ENCODE measurements at regions of chrX and their contacts with region 1.

Region 1: DNA sequence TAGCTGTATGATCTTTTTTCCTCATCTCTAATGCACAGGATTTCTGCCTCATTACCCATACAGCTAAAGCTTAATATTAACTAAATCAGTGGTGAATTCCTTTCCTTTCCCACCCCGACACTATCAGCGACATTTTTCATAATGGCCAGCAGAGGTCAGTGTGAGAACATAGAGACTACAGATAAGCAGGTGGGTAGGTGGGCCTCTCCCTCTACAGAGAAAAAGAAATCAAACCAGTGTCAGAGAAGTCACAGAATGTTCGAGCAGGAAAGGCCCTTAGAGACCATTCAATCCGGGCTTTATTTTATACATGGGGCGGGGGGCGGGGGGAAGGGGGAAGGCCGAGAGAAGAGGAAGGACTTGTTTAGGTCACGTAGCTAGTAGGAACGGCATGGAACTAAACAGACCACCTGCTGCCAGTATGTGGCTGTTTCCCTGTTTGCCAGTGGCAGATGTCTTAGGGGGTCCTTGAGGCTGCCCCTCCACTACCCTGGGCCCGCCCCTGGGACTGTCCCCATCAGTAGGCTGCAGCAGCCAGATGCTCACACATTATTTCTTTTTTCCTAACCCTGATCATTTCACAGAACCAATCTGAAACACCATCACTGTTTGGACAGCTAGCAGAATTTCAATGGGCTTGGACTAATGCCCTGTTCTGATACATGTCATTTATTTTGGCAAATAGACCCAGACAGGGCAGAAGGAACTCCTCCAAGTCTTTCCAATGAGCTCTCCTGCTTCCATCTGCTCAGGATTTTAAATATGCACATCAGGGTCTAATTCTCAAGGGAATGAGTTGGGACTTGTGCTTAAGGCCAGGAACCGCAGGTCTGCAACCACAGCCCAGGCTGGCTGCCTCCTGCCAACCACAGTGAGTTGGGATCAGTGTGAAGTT is 133.4 kb downstream of the ATG4A start:
- DNase-seq: no peak
- ATAC-seq: peak in 7 of 8 donors; percentile 16 to 69 (median 58)
- H3K4me3 ChIP-seq: no peak overlapping the region
- H3K27ac ChIP-seq: no peak overlapping the region
- H3K4me1 ChIP-seq: peaks cover 0 to 11% (median 0%) of the 10 kb centered on the region in 9 donors
- H3K27me3 ChIP-seq: peaks cover 0 to 48% (median 0%) of the 10 kb centered on the region in 7 donors
- CTCF ChIP-seq: peak in 8 of 9 donors; percentile 17 to 63 (median 56)

Region 2: DNA sequence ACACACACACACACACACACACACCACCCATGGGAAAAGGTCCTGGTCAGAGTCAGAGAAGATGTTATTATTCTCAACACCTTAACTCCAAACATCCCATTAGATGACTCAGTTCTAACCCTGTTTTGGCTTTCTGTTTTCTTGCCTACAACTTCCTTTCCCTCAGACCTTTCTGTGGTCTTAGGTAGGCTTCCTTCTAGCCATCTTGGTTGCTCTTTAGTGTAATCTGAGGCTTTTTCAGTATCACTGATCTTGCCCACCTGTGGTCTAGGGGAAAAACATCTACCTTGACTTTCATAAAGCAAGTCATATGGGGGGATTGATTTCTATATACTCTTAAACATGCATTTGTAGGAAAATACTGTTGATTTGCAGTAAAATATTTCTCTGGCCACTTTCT is 76.5 kb before region 1 on chrX:
- intact Hi-C with region 1: no loop called
- DNase-seq: no peak
- ATAC-seq: no peak
- H3K4me3 ChIP-seq: no peak overlapping the region
- H3K27ac ChIP-seq: no peak overlapping the region
- H3K4me1 ChIP-seq: no peaks in the 10 kb centered on the region
- H3K27me3 ChIP-seq: peaks cover 0 to 6% (median 0%) of the 10 kb centered on the region in 7 donors
- CTCF ChIP-seq: no peak

Region 3: GRCh38 chrX:108299101-108299591 is 74.2 kb after region 1 on chrX:
- intact Hi-C with region 1: loop called in 5 of 10 experiments (anchors 2 to 10 kb)
- DNase-seq: no peak
- ATAC-seq: peak in 2 of 8 donors; percentile 31 to 61
- H3K4me3 ChIP-seq: no peak overlapping the region
- H3K27ac ChIP-seq: no peak overlapping the region
- H3K4me1 ChIP-seq: peaks cover 0 to 11% (median 0%) of the 10 kb centered on the region in 9 donors
- H3K27me3 ChIP-seq: peaks cover 0 to 52% (median 0%) of the 10 kb centered on the region in 7 donors
- CTCF ChIP-seq: no peak

Region 4: DNA sequence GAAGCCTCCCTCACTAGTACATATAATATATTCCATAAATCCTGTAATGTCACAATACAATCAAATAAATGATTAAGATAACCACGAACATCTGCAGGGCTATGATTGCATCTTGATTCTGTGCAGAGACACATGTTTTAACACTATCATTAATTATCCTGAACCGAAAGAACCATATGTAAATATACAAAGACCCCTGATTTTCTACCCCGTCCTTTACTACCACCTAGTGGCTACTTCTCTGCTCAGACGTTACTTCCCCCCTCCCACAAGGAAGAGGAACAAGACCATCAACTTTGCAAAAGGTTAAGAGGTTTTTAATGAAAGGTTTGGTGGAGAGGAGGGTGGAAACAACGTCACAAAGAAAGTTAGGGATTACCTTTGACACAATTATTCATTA is 79.2 kb after region 1 on chrX:
- intact Hi-C with region 1: loop called in 5 of 10 experiments (anchors 2 to 10 kb)
- DNase-seq: no peak
- ATAC-seq: no peak
- H3K4me3 ChIP-seq: no peak overlapping the region
- H3K27ac ChIP-seq: no peak overlapping the region
- H3K4me1 ChIP-seq: peaks cover 0 to 12% (median 0%) of the 10 kb centered on the region in 9 donors
- H3K27me3 ChIP-seq: peaks cover 0 to 63% (median 0%) of the 10 kb centered on the region in 7 donors
- CTCF ChIP-seq: peak in 7 of 9 donors; percentile 29 to 55 (median 39)

Region 5: GRCh38 chrX:108332281-108332680 is 107.3 kb after region 1 on chrX:
- intact Hi-C with region 1: no loop called
- DNase-seq: no peak
- ATAC-seq: no peak
- H3K4me3 ChIP-seq: no peak overlapping the region
- H3K27ac ChIP-seq: no peak overlapping the region
- H3K4me1 ChIP-seq: no peaks in the 10 kb centered on the region
- H3K27me3 ChIP-seq: peaks cover 0 to 29% (median 0%) of the 10 kb centered on the region in 7 donors
- CTCF ChIP-seq: no peak

Region 6: GRCh38 chrX:108537005-108537404 is 312.0 kb after region 1 on chrX:
- intact Hi-C with region 1: loop called in 7 of 10 experiments (anchors 5 to 10 kb)
- DNase-seq: no peak
- ATAC-seq: peak in 1 of 8 donors; percentile 50
- H3K4me3 ChIP-seq: no peak overlapping the region
- H3K27ac ChIP-seq: no peak overlapping the region
- H3K4me1 ChIP-seq: no peaks in the 10 kb centered on the region
- H3K27me3 ChIP-seq: peaks cover 0 to 19% (median 0%) of the 10 kb centered on the region in 7 donors
- CTCF ChIP-seq: peak; percentile 11 to 65 (median 57)